ENCODE measurements at regions of chr17 and their contacts with region 1.

Region 1: GRCh38 chr17:13626703-13627102 is 25.0 kb upstream of the HS3ST3A1 start:
- DNase-seq: no peak
- H3K4me3 Mint-ChIP-seq: no peak overlapping the region
- H3K27ac Mint-ChIP-seq: no peak overlapping the region
- H3K4me1 Mint-ChIP-seq: no peaks in the 10 kb centered on the region
- H3K27me3 Mint-ChIP-seq: no peaks in the 10 kb centered on the region
- CTCF ChIP-seq: no peak

Region 2: DNA sequence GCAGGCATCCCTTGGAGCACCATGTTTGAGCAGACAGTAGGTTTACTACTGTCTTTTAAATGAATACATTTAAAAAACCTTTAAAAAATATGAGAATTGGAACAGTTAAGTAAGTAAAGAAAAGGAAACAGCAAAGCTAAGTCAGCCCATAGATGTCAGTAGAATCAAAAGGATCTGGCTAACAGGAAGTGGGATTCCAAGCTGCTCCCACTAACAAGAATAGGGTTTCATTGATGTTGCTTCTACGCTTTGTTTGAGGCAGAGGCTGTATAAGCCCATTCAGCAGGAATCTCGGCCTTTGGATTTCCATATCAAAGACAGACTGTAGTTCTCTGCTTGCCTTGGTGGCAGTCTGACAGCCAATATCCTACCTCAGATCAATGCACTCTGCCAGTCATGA is 486.0 kb before region 1 on chr17:
- CTCF ChIA-PET with region 1: interaction called, 12 read pairs
- intact Hi-C with region 1: no loop called
- DNase-seq: no peak
- H3K4me3 Mint-ChIP-seq: no peak overlapping the region
- H3K27ac Mint-ChIP-seq: no peak overlapping the region
- H3K4me1 Mint-ChIP-seq: no peaks in the 10 kb centered on the region
- H3K27me3 Mint-ChIP-seq: no peaks in the 10 kb centered on the region
- CTCF ChIP-seq: no peak

Region 3: GRCh38 chr17:13541032-13541480 is 85.6 kb before region 1 on chr17:
- CTCF ChIA-PET with region 1: no interaction called
- intact Hi-C with region 1: no loop called
- DNase-seq: no peak
- H3K4me3 Mint-ChIP-seq: no peak overlapping the region
- H3K27ac Mint-ChIP-seq: no peak overlapping the region
- H3K4me1 Mint-ChIP-seq: no peaks in the 10 kb centered on the region
- H3K27me3 Mint-ChIP-seq: no peaks in the 10 kb centered on the region
- CTCF ChIP-seq: no peak